ENCODE measurements at regions of chr3 and their contacts with region 1.

Region 1: GRCh38 chr3:173045770-173046382 is 95.2 kb downstream of the SPATA16 start:
- DNase-seq: no peak
- ATAC-seq: no peak
- H3K4me3 ChIP-seq: no peak overlapping the region
- H3K27ac ChIP-seq: no peak overlapping the region
- H3K4me1 ChIP-seq: no peaks in the 10 kb centered on the region
- H3K27me3 ChIP-seq: no peaks in the 10 kb centered on the region

Region 2: DNA sequence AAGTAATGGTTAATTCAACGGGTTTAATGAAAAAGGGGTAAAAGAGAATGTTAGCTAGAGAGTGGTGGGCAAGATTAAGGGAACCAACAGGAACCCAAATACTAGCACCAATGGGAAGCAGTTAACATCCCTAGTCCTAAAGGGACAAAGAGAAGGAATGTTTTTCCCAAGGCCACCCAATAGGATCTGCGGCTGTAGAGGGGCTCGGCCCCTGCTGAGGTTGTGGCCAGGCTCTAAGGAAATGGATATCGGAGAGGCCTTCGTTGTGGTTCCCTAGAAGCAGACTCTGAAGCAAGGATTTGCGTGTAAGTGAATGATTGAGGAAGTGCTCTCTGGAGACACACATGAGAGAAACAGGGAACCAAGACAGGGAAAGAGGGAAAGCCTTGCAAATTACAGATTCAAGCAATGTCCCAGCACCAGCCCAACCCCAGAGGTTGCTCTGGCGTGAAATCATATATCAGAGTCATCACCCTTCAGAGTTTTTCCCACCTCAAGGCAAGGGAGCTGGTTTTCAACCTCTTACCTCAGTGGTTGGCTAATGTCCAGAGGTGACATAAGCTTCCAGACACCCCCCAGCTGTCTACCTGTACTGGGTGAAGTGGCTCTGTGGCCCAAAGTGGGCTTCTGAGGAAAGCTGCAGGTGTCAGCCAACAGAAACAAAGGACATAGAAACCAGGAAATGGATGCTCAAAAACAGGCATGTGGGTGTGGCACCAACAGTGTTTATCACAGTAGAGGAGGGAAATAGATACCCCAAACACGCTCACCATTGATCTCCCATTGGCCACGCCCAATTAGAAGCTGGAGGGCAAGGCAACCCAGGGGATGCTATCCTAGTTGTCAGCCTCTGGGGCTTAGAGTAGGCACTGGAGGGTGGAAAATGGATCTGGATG is 1501.9 kb before region 1 on chr3:
- intact Hi-C with region 1: no loop called
- DNase-seq: no peak
- ATAC-seq: no peak
- H3K4me3 ChIP-seq: no peak overlapping the region
- H3K27ac ChIP-seq: no peak overlapping the region
- H3K4me1 ChIP-seq: no peaks in the 10 kb centered on the region
- H3K27me3 ChIP-seq: no peaks in the 10 kb centered on the region

Region 3: DNA sequence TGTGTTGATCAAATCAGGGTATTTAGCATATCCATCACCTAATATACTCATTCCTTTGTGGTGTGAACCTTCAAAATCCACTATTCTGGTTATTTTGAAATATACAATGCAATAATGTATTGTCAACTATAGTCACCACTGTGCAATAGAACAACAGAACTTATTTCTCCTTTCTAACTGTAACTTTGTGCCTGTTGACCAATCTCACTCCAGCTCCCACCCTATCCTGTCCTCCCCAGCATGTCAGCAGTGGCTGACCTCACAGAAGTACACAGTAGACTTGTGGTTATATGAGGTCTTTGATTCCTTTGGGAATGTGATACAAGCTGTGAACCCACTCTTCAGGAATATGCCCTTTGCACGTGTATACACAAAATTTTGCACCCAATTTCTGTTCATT is 231.1 kb before region 1 on chr3:
- intact Hi-C with region 1: loop called in 1 of 2 experiments (anchors 5 kb)
- DNase-seq: no peak
- ATAC-seq: no peak
- H3K4me3 ChIP-seq: no peak overlapping the region
- H3K27ac ChIP-seq: no peak overlapping the region
- H3K4me1 ChIP-seq: no peaks in the 10 kb centered on the region
- H3K27me3 ChIP-seq: no peaks in the 10 kb centered on the region

Region 4: DNA sequence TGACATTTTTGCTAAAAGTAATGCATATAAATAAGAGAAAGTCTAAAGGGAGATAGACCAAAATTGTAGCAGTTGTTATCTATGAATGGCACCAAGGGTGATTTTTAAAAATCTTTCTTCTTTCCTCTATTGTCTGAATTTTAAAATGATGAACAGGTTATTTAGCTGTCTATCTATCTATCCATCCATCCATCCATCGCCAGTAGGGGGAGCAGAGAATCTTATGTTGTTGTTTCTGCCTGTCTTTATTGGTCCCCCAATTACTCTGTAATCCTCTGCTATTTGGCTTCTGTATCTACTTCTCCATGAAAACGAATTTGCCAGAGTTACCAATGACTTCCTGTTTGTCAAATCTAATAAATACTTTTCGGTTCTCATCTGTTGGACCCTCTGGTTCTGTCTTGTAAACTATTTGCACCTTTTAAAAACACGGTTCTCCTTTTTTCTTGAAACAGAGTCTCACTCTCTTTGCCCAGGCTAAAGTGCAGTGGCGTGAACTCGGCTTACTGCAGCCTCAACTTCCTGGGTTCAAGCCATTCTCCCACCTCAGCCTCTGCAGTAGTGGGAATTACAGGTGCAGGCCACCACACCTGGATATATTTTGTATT is 209.4 kb before region 1 on chr3:
- intact Hi-C with region 1: loop called in 1 of 2 experiments (anchors 5 kb)
- DNase-seq: no peak
- ATAC-seq: no peak
- H3K4me3 ChIP-seq: no peak overlapping the region
- H3K27ac ChIP-seq: no peak overlapping the region
- H3K4me1 ChIP-seq: no peaks in the 10 kb centered on the region
- H3K27me3 ChIP-seq: no peaks in the 10 kb centered on the region

Measured in aorta (tissue), 5 donors.